ENCODE measurements at regions of chr1 and their contacts with region 1.

Region 1: DNA sequence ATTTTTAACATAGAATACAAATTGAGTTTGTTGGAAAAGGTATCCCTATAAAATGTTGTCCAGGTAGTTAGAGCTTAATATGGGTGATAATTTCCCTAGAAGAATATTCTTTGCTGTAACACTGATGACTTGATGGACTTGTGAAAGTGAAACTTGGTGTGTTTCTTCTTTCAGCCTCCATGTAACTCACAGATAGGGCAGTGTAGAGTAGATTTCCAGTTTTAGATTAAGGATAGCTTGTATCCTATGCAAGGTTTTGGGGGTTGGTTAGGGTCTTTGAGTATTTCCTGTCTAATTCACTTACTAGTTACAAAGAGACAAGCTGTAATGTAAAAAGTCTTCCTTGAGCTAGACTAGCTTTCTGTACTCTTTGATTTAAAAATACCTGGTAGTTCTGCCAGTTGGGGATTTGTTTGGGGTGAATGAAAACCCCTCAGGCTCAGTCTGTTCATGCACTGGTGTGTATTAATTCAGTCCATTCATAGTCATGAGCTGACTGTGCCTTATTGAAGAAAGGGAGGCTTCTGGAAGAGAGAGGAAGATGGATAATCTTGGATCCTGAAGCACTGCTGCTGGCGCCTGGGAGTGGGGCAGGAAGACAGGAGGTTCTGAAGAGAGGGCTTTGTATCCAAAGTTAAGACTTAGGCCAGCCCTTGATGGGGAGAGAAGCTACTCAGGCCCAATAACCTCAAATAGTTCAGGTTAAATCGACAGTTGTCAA is 83.6 kb downstream of the CAMTA1 start:
- DNase-seq: no peak
- H3K4me3 ChIP-seq: no peak overlapping the region
- CTCF ChIP-seq: no peak

Region 2: DNA sequence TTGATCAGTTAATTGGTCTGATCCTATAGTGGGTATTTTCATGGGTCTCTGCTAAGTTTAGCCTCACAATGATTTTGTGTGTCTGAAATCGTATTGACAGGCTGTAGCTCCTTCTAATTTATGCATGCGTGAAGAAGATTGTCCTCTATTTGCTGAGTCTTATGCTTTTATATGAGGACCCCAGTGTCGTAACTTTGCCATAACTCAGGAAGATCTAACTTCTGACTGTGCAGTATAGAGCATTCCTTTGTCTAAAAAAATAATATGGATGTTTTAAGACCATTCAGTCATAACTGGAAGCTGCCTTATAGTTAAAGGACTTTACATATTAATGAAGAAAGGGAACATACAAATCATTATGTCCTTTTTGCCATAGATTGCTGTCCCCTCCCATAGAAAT is 10.2 kb before region 1 on chr1:
- CTCF ChIA-PET with region 1: interaction called, 10 read pairs
- POLR2A ChIA-PET with region 1: no interaction called
- DNase-seq: no peak
- H3K4me3 ChIP-seq: no peak overlapping the region
- CTCF ChIP-seq: no peak

Region 3: DNA sequence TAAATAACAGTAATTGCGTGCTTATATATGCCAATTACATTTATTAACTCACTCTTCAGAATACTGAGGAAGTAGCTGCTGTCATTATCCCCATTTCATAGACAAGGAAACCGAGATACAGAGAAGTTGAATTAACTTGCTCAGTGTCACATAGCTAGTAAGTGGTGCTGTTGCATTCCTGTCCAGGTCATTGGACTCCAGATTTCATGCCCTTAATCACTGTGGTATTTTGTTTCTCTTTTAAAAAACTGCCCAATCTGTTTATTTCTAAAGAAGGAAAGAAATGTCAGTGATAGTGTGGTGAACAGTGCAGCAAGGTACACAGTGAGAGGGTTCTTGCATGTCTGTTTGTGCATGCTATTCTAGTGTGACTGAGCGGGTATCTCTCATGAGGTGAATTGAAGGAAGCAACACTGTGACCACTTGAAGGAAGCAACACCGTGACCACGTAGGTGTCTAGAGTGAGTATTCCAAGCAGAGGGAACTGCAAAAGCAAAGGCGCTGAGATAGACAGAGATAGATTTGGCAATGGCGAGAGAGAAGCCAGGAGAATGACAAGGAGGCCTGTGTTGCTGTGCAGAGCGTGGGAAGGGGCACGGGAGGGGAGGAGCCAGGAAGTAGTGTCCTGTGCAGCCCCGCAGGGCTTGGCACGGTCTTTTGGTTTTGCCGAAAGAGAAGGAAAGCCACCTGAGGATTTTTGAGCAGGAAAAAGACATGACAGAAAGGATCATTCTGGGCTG is 12.3 kb after region 1 on chr1:
- CTCF ChIA-PET with region 1: interaction called, 10 read pairs
- POLR2A ChIA-PET with region 1: no interaction called
- DNase-seq: no peak
- H3K4me3 ChIP-seq: no peak overlapping the region
- CTCF ChIP-seq: no peak